Sigmoid colon (tissue), 7 donors: ENCODE measurements at regions of chr11 and their contacts with region 1.

Region 1: DNA sequence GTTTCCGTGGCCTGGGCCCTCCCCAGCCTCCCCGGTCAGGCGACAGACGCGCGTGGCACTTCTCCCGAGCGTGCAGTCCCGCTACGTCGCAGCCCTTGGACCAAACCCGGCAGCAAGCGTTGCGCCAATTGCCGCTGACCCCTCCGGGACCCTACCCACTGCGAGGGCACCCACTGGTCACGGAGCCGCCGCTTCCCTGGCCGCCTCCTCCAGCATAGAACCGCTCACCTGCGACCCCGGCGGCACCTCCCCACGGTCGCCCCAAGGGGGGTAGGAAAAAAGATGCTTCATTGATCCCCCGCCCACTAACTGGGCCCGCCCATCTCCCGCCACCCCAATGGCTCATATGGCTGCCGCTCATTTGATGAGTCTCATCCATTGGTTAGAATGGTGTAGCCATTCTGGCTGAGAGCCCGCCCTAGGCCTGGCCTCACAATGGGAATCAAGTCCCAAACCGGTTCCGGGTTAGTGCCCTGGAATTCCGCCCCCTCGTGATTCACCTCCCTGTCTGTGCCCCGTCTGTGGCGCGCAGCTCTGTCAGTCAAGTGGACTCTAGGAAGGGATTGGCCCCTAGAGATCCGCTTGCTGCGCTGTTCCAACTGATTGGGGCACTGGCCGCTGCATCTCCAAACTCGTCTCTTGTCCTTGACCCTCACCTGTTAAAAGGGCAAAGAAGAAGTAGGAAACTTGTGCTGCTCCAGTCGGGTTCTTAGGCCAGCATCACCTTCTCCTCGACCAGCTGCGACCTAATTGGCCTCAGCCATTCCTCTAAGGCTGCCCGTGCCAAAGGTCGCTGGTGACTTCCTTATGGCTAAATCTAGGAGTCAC is at the start of gene MSANTD4:
- DNase-seq: peak; percentile 100
- H3K4me3 ChIP-seq: peak within 1 kb of the TSS; percentile 72 to 93 (median 87)
- H3K27ac ChIP-seq: peak within 1 kb of the TSS; percentile 80 to 89 (median 86)
- H3K4me1 ChIP-seq: peaks cover 0 to 38% (median 29%) of the 10 kb centered on the region in 4 donors
- H3K27me3 ChIP-seq: no peaks in the 10 kb centered on the region
- CTCF ChIP-seq: no peak
- EP300 ChIP-seq: no peak
- POLR2A ChIP-seq: no peak
- total RNA-seq, gene MSANTD4: 18.1 to 35.0 (median 25.6) TPM

Region 2: GRCh38 chr11:104653406-104653805 is 1368.8 kb before region 1 on chr11:
- intact Hi-C with region 1: no loop called
- DNase-seq: no peak
- H3K4me3 ChIP-seq: peak overlapping the region in 1 of 4 donors; percentile 6
- H3K27ac ChIP-seq: no peak overlapping the region
- H3K4me1 ChIP-seq: no peaks in the 10 kb centered on the region
- H3K27me3 ChIP-seq: no peaks in the 10 kb centered on the region
- CTCF ChIP-seq: no peak
- EP300 ChIP-seq: no peak
- POLR2A ChIP-seq: no peak

Region 3: DNA sequence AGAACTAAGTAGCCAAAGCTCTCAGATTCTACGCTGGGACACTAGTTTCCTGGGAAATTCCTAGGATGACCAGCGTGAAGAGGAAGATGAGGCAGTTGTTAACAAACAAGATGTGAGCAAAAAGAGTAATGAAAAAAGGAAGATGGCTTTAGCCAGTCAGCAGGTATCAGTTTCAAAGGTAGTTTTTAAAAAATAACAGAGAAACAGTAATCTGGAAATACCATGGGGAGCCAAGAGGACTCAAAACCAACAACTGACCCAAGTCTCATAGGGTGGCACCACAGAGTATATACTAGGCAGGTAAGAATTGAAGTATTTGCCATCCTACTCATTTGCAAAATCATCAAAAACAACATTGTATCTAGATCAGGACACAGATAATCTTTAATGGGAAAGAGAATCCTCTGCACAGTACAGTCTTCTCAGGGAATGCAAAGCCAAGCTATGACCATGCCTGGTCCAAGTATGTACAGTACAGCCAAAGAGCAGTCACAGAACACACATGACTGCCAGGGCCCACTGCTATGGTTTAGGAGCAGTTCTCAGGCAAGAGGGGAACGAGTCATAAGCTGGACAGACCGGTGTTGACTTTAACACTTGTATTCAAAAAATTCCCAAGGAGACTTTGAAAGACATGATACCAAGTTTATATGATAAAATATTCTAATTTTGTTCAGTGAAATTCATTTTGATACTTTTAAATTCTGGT is 20.7 kb before region 1 on chr11:
- intact Hi-C with region 1: no loop called
- DNase-seq: no peak
- H3K4me3 ChIP-seq: no peak overlapping the region
- H3K27ac ChIP-seq: no peak overlapping the region
- H3K4me1 ChIP-seq: no peaks in the 10 kb centered on the region
- H3K27me3 ChIP-seq: no peaks in the 10 kb centered on the region
- CTCF ChIP-seq: no peak
- EP300 ChIP-seq: no peak
- POLR2A ChIP-seq: no peak

Region 4: DNA sequence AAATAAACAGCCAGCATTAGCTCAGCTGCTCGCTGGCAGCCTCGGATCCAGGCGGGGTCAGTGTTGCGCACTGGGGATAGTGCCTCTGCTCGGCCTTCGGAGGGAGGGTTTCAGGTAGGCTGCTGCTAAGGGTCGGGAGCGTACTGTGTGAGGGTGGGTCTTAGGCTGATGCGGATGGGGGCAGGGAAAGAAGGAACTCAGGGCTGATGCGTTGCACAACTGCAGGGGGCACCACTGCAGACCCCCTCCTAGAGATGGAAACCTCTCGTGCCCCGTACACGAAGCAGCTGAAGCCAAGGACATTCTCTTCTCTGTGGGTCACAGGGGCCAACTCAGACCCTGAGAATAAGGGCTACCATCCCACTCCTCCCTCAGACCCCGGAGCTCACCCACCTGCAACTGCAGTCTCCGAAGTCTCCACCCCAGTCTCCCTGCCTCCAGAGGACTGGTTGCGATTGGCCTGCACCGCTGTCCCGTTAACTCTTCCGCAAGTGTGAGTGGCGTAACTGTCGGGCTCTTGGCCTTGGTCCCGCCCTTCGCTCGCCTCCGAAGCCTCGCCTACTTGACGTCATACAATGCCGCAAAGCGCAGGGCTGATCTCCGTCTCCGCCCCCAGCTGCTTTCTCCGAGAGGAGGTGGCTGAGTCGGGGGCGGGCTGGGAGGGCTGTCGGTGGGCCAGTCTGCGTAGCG is 54.9 kb after region 1 on chr11 and contains the start of gene KBTBD3:
- intact Hi-C with region 1: loop called (anchors 1 kb)
- DNase-seq: peak; percentile 100
- H3K4me3 ChIP-seq: peak within 1 kb of the TSS; percentile 83 to 92 (median 86)
- H3K27ac ChIP-seq: peak within 1 kb of the TSS; percentile 96 to 99 (median 97)
- H3K4me1 ChIP-seq: peaks cover 0 to 53% (median 44%) of the 10 kb centered on the region in 4 donors
- H3K27me3 ChIP-seq: no peaks in the 10 kb centered on the region
- CTCF ChIP-seq: peak in 1 of 4 experiments; percentile 11
- EP300 ChIP-seq: no peak
- POLR2A ChIP-seq: peak; percentile 69 to 83
- total RNA-seq, gene KBTBD3: 4.5 to 10.3 (median 5.9) TPM